Uterus (tissue), 4 donors: ENCODE measurements at regions of chr12 and their contacts with region 1.

Region 1: DNA sequence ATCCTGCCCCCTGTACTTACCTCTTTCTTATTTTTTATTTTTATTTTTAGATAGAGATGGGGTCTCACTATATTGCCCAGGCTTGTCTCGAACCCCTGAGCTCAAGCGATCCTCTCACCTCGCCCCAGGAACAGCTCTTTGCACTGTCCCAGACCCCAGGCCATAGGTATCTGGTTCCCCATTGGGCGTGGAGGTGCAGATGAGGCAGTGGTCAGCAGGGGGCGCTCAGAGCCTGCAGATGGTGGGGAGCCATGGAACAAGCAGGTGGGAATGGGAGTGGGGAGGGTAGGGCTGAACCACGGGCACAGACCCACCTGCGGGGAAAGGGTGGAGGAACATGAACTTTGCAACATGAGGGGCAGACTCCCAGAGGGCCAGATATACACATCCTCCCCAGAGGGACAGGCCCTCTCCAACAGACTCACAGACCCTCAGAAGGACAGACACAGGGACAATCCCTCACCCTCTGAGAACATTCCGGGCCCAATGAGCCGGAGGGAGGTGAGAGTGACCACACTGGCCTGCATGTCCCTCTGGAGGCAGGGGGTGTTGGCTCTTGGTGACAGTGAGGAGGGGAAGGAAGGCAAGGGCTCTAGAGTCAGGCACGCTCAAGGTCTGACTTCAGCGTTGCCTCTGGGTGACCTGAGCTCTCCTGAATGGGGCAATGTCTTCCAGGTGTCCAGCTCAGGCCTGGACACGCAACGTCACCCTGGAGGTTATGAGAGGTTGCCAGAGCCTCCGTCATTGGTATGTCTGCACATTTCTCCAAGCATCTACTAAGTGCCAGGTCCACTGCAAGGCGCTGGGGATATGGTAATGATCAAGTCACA is 34.9 kb downstream of the KRT80 start:
- DNase-seq: peak; percentile 72
- H3K4me3 ChIP-seq: no peak overlapping the region
- H3K27ac ChIP-seq: no peak overlapping the region
- H3K4me1 ChIP-seq: no peaks in the 10 kb centered on the region
- H3K27me3 ChIP-seq: no peaks in the 10 kb centered on the region
- CTCF ChIP-seq: peak; percentile 85 to 95 (median 90)
- POLR2A ChIP-seq: peak in 1 of 2 donors; percentile 11

Region 2: GRCh38 chr12:51351913-51352532 is 804.9 kb before region 1 on chr12:
- intact Hi-C with region 1: no loop called
- DNase-seq: no peak
- H3K4me3 ChIP-seq: no peak overlapping the region
- H3K27ac ChIP-seq: no peak overlapping the region
- H3K4me1 ChIP-seq: no peaks in the 10 kb centered on the region
- H3K27me3 ChIP-seq: no peaks in the 10 kb centered on the region
- CTCF ChIP-seq: peak in 2 of 4 experiments; percentile 13 to 18
- POLR2A ChIP-seq: no peak

Region 3: GRCh38 chr12:52213512-52214420 is 56.8 kb after region 1 on chr12:
- intact Hi-C with region 1: loop called (anchors 5 kb)
- DNase-seq: peak in 1 of 2 donors; percentile 59
- H3K4me3 ChIP-seq: no peak overlapping the region
- H3K27ac ChIP-seq: no peak overlapping the region
- H3K4me1 ChIP-seq: peaks cover 0 to 4% of the 10 kb centered on the region in 2 donors
- H3K27me3 ChIP-seq: no peaks in the 10 kb centered on the region
- CTCF ChIP-seq: peak; percentile 73 to 96 (median 88)
- POLR2A ChIP-seq: no peak

Region 4: DNA sequence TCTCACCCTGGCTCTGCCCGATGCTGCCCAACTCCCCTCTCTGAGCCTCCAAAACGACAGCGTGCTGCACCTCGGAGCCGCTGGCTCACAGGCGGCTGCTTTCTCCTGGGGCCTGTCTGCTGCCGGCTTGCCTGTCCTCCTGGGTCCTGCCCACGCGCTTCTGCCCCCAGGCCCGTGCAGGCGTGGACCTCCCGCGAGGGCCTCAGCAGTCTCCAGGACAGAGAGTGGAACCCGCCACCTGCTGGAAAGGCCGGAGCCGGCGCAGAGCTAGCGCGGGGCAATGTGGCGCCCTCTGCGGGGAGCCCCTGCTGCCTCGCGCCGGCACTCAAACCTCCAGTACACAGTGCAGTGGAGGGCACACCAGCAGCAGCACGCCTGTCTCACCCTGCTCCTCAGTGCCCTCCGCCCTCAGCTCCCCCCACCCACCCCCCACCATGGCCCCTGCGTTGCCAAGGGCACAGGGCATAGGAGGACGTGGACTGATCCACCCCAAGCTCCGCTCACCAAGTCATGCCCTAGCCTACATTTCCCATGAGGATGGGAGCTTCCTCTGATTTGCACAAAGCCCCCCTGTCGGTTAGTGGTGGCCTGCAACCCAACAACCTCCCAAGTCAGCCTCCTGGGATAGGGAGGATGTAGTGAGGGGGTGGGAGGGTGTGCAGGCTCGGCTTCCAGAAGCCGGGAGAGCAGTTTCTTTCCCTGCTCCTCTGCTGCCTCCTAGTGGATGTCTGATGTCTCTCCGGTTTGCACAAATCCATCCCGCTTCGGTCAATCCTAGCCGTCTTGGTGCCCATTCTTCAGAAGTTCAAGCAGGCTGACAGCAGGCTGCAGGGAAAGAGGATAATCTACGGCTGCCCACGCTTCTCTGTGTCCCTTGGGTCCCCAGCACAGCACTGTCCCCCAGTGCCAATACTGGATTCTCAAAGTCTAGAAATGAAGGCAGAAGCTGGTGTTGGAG is 722.7 kb after region 1 on chr12:
- intact Hi-C with region 1: loop called (anchors 10 kb)
- DNase-seq: peak; percentile 73 to 85
- H3K4me3 ChIP-seq: peak overlapping the region in 1 of 2 donors; percentile 14
- H3K27ac ChIP-seq: peak overlapping the region; percentile 26 to 43
- H3K4me1 ChIP-seq: peaks cover 0 to 13% of the 10 kb centered on the region in 2 donors
- H3K27me3 ChIP-seq: no peaks in the 10 kb centered on the region
- CTCF ChIP-seq: peak; percentile 60 to 93 (median 78)
- POLR2A ChIP-seq: no peak

Region 5: GRCh38 chr12:52980693-52981423 is 823.9 kb after region 1 on chr12:
- intact Hi-C with region 1: loop called (anchors 10 kb)
- DNase-seq: peak; percentile 82 to 88
- H3K4me3 ChIP-seq: no peak overlapping the region
- H3K27ac ChIP-seq: no peak overlapping the region
- H3K4me1 ChIP-seq: no peaks in the 10 kb centered on the region
- H3K27me3 ChIP-seq: no peaks in the 10 kb centered on the region
- CTCF ChIP-seq: peak; percentile 92 to 100 (median 98)
- POLR2A ChIP-seq: no peak